ENCODE measurements at regions of chr16 and their contacts with region 1.

Region 1: DNA sequence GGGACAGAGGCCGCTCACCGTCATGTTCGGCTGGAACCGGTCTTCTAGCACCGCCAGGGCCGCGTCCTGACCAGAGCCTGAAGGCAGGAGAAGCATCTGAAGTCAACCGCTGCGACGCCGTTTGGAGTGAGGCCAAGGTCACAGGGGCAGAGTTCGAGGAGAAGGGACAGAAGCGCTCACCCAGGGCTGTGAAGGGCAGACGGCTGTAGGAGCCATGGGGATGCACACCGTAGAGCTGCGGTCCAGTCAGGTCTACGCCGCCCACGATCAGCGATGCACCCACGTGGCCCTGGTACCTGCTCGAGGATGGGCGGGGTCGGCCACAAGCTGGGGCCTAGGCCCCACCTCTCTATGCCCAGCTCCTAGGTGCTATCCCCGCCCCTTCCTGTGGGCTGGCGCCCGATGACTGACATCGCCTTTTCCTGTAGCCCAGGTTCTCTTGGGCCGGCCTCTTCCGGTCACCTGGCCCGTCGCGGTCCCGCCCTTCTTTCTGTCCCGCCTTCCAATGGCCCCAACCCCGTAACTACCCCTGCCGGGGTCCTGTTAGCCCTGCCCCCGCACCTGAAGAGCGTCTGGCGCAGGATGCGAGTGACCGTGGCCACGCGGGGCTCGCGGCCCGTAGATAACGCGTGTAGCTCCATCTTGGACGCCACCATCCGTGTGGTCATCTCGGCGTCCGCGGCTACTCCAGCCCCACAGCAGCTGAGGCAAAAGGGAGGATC is 1.1 kb downstream of the PSMB10 start:
- DNase-seq: peak; percentile 71 to 95 (median 91)
- ATAC-seq: peak; percentile 96
- H3K4me3 ChIP-seq: peak overlapping the region; percentile 99
- H3K4me3 Mint-ChIP-seq: peak overlapping the region; percentile 89 to 100 (median 100)
- H3K27ac ChIP-seq: peak overlapping the region; percentile 77
- H3K27ac Mint-ChIP-seq: peak overlapping the region; percentile 87 to 99 (median 99)
- H3K4me1 ChIP-seq: peaks cover 21 to 32% of the 10 kb centered on the region in 2 donors
- H3K4me1 Mint-ChIP-seq: peaks cover 28 to 48% (median 35%) of the 10 kb centered on the region in 7 donors
- H3K27me3 ChIP-seq: no peaks in the 10 kb centered on the region
- H3K27me3 Mint-ChIP-seq: peaks cover 0 to 3% (median 0%) of the 10 kb centered on the region in 5 donors

Region 2: GRCh38 chr16:67667817-67668494 is 267.6 kb before region 1 on chr16:
- CTCF ChIA-PET with region 1: no interaction called
- POLR2A ChIA-PET with region 1: interaction called, 4 read pairs
- intact Hi-C with region 1: loop called in 1 of 2 experiments (anchors 2 kb)
- DNase-seq: peak; percentile 61 to 88 (median 82)
- ATAC-seq: peak; percentile 93
- H3K4me3 ChIP-seq: peak overlapping the region; percentile 56
- H3K4me3 Mint-ChIP-seq: peak overlapping the region; percentile 42 to 96 (median 82)
- H3K27ac ChIP-seq: peak overlapping the region; percentile 73
- H3K27ac Mint-ChIP-seq: peak overlapping the region in 6 of 9 donors; percentile 31 to 67 (median 58)
- H3K4me1 ChIP-seq: peaks cover 9 to 12% of the 10 kb centered on the region in 2 donors
- H3K4me1 Mint-ChIP-seq: peaks cover 10 to 32% (median 17%) of the 10 kb centered on the region in 7 donors
- H3K27me3 ChIP-seq: no peaks in the 10 kb centered on the region
- H3K27me3 Mint-ChIP-seq: no peaks in the 10 kb centered on the region

Region 3: DNA sequence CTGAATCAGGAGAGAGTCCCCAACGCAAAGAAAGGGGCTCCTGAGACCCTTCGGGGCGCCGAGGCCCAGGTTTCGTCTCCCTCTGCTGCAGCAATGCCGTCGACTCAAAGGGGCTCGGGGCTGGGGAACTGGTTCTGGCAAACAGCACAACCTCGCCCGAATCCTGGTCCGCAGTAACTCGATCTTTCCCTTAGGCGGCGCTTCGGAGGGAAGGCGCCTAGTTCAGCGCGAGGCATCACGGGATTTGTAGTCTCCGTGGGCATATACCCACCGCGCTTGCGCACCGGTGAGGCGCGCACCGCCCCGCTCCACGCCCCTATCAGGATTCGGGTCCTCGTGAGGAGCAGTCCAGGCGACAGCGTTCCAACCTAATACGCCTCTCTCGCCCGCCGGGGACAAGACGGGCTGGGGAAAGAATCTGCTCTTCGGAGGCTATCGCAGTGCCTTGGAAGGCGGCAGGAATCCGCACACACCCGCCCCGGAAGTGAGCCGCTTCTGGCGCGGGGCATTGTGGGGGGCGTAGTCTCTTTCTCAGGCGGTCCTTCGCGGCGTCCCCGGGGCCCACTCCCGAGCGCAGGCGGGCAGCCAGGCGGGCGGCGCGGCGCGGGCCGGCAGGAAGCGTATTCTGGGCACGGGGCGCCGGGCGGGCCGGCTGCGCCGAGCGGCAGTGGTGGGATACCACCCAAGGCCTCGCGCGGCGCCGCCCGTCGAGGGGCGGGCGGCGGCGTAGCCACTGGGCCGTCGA is 93.6 kb before region 1 on chr16 and contains the start of gene THAP11:
- CTCF ChIA-PET with region 1: interaction called, 3 read pairs
- POLR2A ChIA-PET with region 1: interaction called, 35 read pairs
- intact Hi-C with region 1: loop called (anchors 1 kb)
- DNase-seq: peak; percentile 91 to 99 (median 96)
- ATAC-seq: peak; percentile 76
- H3K4me3 ChIP-seq: peak within 1 kb of the TSS; percentile 100
- H3K4me3 Mint-ChIP-seq: peak within 1 kb of the TSS; percentile 94 to 97 (median 96)
- H3K27ac ChIP-seq: peak within 1 kb of the TSS; percentile 99
- H3K27ac Mint-ChIP-seq: peak within 1 kb of the TSS; percentile 94 to 98 (median 97)
- H3K4me1 ChIP-seq: peaks cover 34 to 36% of the 10 kb centered on the region in 2 donors
- H3K4me1 Mint-ChIP-seq: peaks cover 18 to 41% (median 36%) of the 10 kb centered on the region in 7 donors
- H3K27me3 ChIP-seq: no peaks in the 10 kb centered on the region
- H3K27me3 Mint-ChIP-seq: no peaks in the 10 kb centered on the region
- total RNA-seq, gene THAP11: 29.0 to 62.7 (median 44.6) TPM

Region 4: DNA sequence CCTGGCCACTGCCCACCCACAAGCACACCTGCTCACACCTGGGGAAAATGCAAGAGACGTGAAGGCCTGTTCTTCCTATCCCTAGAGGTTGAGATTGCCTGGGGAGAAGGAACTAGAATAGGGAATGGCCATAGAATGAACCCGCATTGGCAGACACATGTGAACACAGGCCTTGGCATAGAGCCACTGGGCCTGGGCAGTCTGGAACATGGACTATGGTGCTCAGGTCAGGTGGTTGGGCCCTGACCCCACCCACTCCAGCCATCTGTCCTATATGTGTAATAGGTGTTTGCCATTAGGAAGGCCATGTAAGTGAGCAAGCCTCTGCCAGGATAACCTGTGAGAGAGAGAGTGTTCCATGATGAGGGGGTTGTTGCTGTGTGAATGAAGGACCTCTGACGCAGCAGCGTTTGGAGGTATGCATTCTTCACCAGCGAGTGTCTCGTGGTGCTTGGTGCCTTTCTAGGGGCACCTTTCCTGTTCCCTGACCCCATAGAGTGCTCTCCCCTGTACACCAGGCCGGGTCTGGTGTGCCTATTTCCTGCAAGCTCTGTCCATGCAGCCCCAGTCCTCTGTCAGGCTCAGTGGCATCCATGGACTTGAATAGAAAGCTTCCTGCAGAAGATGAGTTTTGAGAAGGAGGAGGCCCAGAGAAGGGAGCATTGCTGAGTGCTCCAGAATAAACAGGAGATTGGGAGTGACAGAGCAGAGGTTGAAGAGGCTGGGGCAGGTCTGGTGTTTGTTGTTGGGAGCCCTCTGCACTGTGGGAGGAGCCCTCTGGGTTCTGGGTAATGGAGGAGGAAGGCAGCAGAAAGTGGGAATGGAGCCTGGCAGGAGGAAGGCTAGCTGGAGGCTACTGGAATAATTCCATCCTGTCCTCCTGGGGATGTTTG is 19.5 kb before region 1 on chr16:
- CTCF ChIA-PET with region 1: no interaction called
- POLR2A ChIA-PET with region 1: no interaction called
- intact Hi-C with region 1: no loop called
- DNase-seq: no peak
- ATAC-seq: no peak
- H3K4me3 ChIP-seq: no peak overlapping the region
- H3K4me3 Mint-ChIP-seq: no peak overlapping the region
- H3K27ac ChIP-seq: no peak overlapping the region
- H3K27ac Mint-ChIP-seq: peak overlapping the region in 3 of 9 donors; percentile 45 to 72 (median 64)
- H3K4me1 ChIP-seq: no peaks in the 10 kb centered on the region
- H3K4me1 Mint-ChIP-seq: peaks cover 23 to 40% (median 32%) of the 10 kb centered on the region in 7 donors
- H3K27me3 ChIP-seq: no peaks in the 10 kb centered on the region
- H3K27me3 Mint-ChIP-seq: no peaks in the 10 kb centered on the region

Region 5: DNA sequence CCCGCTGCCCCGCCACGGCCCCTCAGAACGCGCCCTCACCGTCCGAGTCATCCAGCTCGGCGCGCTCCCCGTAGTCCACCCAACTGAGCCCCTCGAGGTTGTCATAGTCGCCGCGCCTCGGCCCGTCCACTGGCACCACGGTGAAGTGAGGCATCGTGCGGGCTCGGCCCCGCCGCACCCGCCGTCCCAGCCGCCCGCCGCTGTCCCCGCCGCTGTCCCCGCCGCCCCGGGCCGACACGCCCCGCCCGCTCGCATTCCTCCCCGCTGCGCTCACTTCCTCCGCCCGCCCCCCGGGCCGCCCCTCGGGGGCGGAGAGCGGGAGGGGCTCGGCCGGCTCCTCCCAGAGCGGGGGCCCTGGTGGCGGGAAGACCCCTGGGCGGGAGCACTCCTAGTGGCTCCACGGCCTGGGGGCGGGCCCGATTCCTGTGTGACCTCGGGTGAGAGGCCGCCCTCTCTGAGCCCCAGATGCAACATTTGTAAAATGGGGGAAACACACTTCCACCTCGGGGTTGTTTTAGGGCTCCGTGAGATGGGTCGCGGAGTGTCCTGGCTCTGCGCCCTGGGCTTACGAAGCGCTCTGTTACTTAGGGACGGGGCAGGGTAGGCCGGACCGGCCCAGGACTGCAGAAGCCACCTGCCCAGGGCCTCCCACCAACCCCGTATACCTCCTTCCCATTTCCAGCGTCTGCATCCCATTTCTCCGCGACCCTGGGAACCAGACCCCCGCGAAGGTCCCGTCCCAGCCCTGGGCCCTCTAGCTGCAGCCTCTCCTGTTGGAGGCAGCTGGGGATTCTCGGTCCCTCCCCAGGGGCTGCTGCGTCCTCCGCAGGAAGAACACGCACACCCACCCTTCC is 33.1 kb after region 1 on chr16 and contains the start of gene SLC12A4:
- CTCF ChIA-PET with region 1: interaction called, 7 read pairs
- POLR2A ChIA-PET with region 1: interaction called, 15 read pairs
- intact Hi-C with region 1: loop called (anchors 1 kb)
- DNase-seq: peak; percentile 74 to 96 (median 81)
- ATAC-seq: peak; percentile 97
- H3K4me3 ChIP-seq: peak within 1 kb of the TSS; percentile 88
- H3K4me3 Mint-ChIP-seq: peak within 1 kb of the TSS; percentile 86 to 100 (median 97)
- H3K27ac ChIP-seq: peak within 1 kb of the TSS; percentile 81
- H3K27ac Mint-ChIP-seq: peak within 1 kb of the TSS; percentile 89 to 95 (median 93)
- H3K4me1 ChIP-seq: peaks cover 10 to 14% of the 10 kb centered on the region in 2 donors
- H3K4me1 Mint-ChIP-seq: peaks cover 20 to 42% (median 29%) of the 10 kb centered on the region in 7 donors
- H3K27me3 ChIP-seq: no peaks in the 10 kb centered on the region
- H3K27me3 Mint-ChIP-seq: no peaks in the 10 kb centered on the region
- total RNA-seq, gene SLC12A4: 22.8 to 44.4 (median 31.3) TPM

Region 6: GRCh38 chr16:67999985-68000384 is 64.4 kb after region 1 on chr16:
- CTCF ChIA-PET with region 1: interaction called, 3 read pairs
- POLR2A ChIA-PET with region 1: interaction called, 29 read pairs
- intact Hi-C with region 1: no loop called
- DNase-seq: peak in 2 of 9 donors; percentile 27 to 39
- ATAC-seq: peak; percentile 34
- H3K4me3 ChIP-seq: peak overlapping the region; percentile 75
- H3K4me3 Mint-ChIP-seq: peak overlapping the region; percentile 80 to 94 (median 90)
- H3K27ac ChIP-seq: peak overlapping the region; percentile 64
- H3K27ac Mint-ChIP-seq: peak overlapping the region; percentile 84 to 99 (median 95)
- H3K4me1 ChIP-seq: peaks cover 29 to 47% of the 10 kb centered on the region in 2 donors
- H3K4me1 Mint-ChIP-seq: peaks cover 28 to 86% (median 57%) of the 10 kb centered on the region in 7 donors
- H3K27me3 ChIP-seq: no peaks in the 10 kb centered on the region
- H3K27me3 Mint-ChIP-seq: no peaks in the 10 kb centered on the region

Region 7: GRCh38 chr16:68074850-68075555 is 139.4 kb after region 1 on chr16:
- CTCF ChIA-PET with region 1: interaction called, 3 read pairs
- POLR2A ChIA-PET with region 1: interaction called, 10 read pairs
- intact Hi-C with region 1: no loop called
- DNase-seq: peak in 2 of 9 donors; percentile 27 to 67
- ATAC-seq: peak; percentile 77
- H3K4me3 ChIP-seq: peak overlapping the region; percentile 9
- H3K4me3 Mint-ChIP-seq: peak overlapping the region; percentile 32 to 79 (median 53)
- H3K27ac ChIP-seq: no peak overlapping the region
- H3K27ac Mint-ChIP-seq: peak overlapping the region; percentile 14 to 90 (median 76)
- H3K4me1 ChIP-seq: peaks cover 75 to 88% of the 10 kb centered on the region in 2 donors
- H3K4me1 Mint-ChIP-seq: peaks cover 69 to 89% (median 86%) of the 10 kb centered on the region in 7 donors
- H3K27me3 ChIP-seq: no peaks in the 10 kb centered on the region
- H3K27me3 Mint-ChIP-seq: no peaks in the 10 kb centered on the region